Dorsolateral prefrontal cortex (tissue), 120 donors: ENCODE measurements at regions of chr4 and their contacts with region 1.

Region 1: GRCh38 chr4:172202480-172203076 is 389.4 kb downstream of the GALNTL6 start:
- DNase-seq: no peak
- H3K4me3 ChIP-seq: no peak overlapping the region
- H3K27ac ChIP-seq: no peak overlapping the region
- H3K27me3 ChIP-seq: no peaks in the 10 kb centered on the region
- CTCF ChIP-seq: peak; percentile 30 to 77 (median 60)

Region 2: GRCh38 chr4:170990989-170991589 is 1211.5 kb before region 1 on chr4:
- intact Hi-C with region 1: loop called in 1 of 2 experiments (anchors 10 kb)
- DNase-seq: no peak
- H3K4me3 ChIP-seq: no peak overlapping the region
- H3K27ac ChIP-seq: no peak overlapping the region
- H3K27me3 ChIP-seq: no peaks in the 10 kb centered on the region
- CTCF ChIP-seq: peak in 37 of 56 donors; percentile 12 to 53 (median 34)